GM13976 (cell line): ENCODE measurements at regions of chr2 and their contacts with region 1.

Region 1: DNA sequence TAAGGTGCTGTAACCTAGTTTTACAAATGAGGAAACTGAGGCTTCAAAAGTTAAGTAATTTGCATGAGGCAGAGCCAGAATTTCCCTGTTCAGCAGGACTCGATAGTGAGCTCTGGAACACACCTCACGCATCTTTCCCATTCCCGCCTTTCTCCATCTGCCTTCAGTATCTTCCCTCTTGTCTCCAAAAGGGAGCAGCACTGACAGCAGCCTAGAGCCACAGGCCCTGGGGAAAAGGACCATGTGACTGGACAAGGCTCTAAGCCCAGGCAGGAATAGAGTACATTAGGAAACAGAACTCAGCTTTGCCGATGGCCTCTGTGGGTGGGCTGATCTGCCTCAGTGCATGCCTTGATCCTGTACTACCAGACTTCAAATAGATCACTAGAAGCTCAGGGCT is 21.5 kb downstream of the GPR155 start:
- DNase-seq: no peak
- CTCF ChIP-seq: no peak

Region 2: GRCh38 chr2:174522553-174522952 is 57.2 kb after region 1 on chr2:
- in situ Hi-C with region 1: loop called (anchors 10 kb)
- DNase-seq: peak; percentile 18
- CTCF ChIP-seq: no peak

Region 3: DNA sequence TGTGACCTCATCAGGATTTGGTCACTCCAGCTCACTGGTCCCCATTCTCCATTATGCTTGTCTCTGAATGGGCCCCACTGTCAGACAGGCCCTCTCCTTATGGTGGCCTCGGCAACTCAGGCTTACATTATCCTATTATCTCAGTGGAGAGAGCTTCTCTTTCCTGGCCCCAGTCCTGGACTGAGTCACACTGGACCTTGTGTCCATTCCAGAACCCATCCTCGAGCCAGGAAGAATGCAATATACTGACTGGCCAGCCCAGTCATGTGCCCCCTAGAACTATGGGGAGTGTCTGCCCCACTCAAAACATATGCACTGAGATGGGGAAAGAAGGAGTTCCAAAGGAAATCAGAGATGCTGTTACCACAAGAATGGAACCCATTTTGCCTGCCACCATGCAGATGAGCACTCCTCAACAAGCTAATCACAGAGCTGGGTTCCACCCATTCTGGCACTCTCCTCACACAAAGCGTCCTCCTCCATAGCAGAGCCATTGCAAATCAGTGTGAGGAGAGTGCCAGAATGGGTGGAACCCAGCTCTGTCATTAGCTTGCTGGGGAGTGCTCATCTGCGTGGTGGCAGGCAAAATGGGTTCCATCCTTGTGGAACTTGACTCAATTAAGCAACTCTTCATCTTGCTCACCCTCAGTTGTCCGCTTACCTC is 227.1 kb after region 1 on chr2:
- in situ Hi-C with region 1: loop called (anchors 5 kb)
- DNase-seq: no peak
- CTCF ChIP-seq: no peak